Activated T-helper 1 cell treated with anti-CD3 and anti-CD28 coated beads, Interleukin-12 subunit alpha, Interleukin-12 subunit beta, Interleukin-2, Interleukin-4 antibody, amounts not matched to agents 30 ng/mL and 10 ng/mL and 1 ng/mL, durations not matched to agents 14 hours and 24 hours and 36 hours (primary cell): ENCODE measurements at regions of chr9 and their contacts with region 1.

Region 1: DNA sequence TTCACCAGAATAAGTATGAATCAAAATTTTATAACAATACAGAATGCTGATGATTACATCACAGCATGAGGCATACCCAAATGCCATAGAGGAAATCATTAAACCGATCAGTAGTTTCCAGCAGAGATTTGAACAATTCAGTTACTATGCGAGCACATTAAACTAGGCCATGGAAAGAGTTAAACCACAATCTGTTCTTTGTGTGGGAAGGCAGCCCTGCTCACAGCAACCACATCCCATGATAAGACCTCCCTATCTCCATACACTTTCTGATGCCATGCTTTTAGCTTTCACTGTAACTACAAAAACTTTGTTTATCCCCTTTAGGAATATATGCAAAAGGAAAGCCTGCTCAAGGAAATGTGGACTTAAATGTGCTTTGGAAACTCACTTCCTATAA is 4.5 kb downstream of the NFIB start:
- DNase-seq: no peak
- H3K4me3 Mint-ChIP-seq: no peak overlapping the region
- H3K27ac Mint-ChIP-seq: no peak overlapping the region
- H3K4me1 Mint-ChIP-seq: peaks cover 8% of the 10 kb centered on the region
- H3K27me3 Mint-ChIP-seq: peaks cover 45% of the 10 kb centered on the region

Region 2: DNA sequence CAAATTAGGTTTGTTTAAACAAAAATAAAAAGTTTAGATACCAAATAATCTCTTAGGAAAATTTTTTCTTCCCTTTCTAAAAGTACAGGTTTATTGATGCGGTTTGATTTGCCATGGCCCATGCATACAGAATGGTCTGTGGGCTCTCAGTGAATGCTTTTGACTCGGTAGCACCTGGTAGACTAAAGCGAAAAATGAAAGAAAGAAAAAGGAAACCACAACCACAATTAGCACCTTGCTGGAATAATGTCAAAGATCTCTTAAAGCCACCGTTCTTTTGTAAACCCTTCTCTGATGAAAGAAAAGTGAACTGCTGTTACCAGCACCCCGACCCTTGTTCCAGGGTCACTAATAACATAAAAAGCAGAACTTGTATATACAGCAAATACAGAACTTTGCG is 153.4 kb before region 1 on chr9:
- intact Hi-C with region 1: no loop called
- DNase-seq: no peak
- H3K4me3 Mint-ChIP-seq: no peak overlapping the region
- H3K27ac Mint-ChIP-seq: no peak overlapping the region
- H3K4me1 Mint-ChIP-seq: no peaks in the 10 kb centered on the region
- H3K27me3 Mint-ChIP-seq: peaks cover 2% of the 10 kb centered on the region

Region 3: GRCh38 chr9:14288433-14288832 is 21.0 kb before region 1 on chr9:
- intact Hi-C with region 1: loop called (anchors 2 kb)
- DNase-seq: no peak
- H3K4me3 Mint-ChIP-seq: no peak overlapping the region
- H3K27ac Mint-ChIP-seq: no peak overlapping the region
- H3K4me1 Mint-ChIP-seq: no peaks in the 10 kb centered on the region
- H3K27me3 Mint-ChIP-seq: peaks cover 3% of the 10 kb centered on the region